ENCODE measurements at regions of chr6 and their contacts with region 1.

Region 1: GRCh38 chr6:56851541-56852259 is 103.2 kb upstream of the BEND6 start:
- DNase-seq: peak; percentile 66
- H3K4me3 ChIP-seq: peak overlapping the region; percentile 57 to 73
- H3K27ac ChIP-seq: peak overlapping the region; percentile 86 to 92
- H3K4me1 ChIP-seq: peaks cover 9 to 22% of the 10 kb centered on the region in 2 experiments; a peak in 3 of 4 replicates
- H3K27me3 ChIP-seq: no peaks in the 10 kb centered on the region
- CTCF ChIP-seq: peak; percentile 77
- EP300 ChIP-seq: peak in 1 of 2 experiments; percentile 29; a peak in 1 of 4 replicates
- RAD21 ChIP-seq: peak; percentile 87

Region 2: GRCh38 chr6:56637640-56638039 is 214.1 kb before region 1 on chr6:
- CTCF ChIA-PET with region 1: interaction called, 27 read pairs
- POLR2A ChIA-PET with region 1: no interaction called
- DNase-seq: peak; percentile 43
- H3K4me3 ChIP-seq: no peak overlapping the region
- H3K27ac ChIP-seq: 0 out of 4 replicates have a peak overlapping the region, but pooled peaks of 1 of the 2 experiments have one; percentile 23
- H3K4me1 ChIP-seq: peaks cover 0 to 6% of the 10 kb centered on the region in 2 experiments; a peak in 2 of 4 replicates
- H3K27me3 ChIP-seq: no peaks in the 10 kb centered on the region
- CTCF ChIP-seq: peak; percentile 76
- EP300 ChIP-seq: no peak
- RAD21 ChIP-seq: peak; percentile 86

Region 3: GRCh38 chr6:56699066-56699654 is 152.5 kb before region 1 on chr6:
- CTCF ChIA-PET with region 1: interaction called, 23 read pairs
- POLR2A ChIA-PET with region 1: no interaction called
- DNase-seq: no peak
- H3K4me3 ChIP-seq: no peak overlapping the region
- H3K27ac ChIP-seq: peak overlapping the region in 1 of 2 experiments; percentile 21; a peak in 1 of 4 replicates
- H3K4me1 ChIP-seq: peaks cover 0 to 19% of the 10 kb centered on the region in 2 experiments; a peak in 3 of 4 replicates
- H3K27me3 ChIP-seq: no peaks in the 10 kb centered on the region
- CTCF ChIP-seq: peak; percentile 68
- EP300 ChIP-seq: no peak
- RAD21 ChIP-seq: peak; percentile 71

Region 4: DNA sequence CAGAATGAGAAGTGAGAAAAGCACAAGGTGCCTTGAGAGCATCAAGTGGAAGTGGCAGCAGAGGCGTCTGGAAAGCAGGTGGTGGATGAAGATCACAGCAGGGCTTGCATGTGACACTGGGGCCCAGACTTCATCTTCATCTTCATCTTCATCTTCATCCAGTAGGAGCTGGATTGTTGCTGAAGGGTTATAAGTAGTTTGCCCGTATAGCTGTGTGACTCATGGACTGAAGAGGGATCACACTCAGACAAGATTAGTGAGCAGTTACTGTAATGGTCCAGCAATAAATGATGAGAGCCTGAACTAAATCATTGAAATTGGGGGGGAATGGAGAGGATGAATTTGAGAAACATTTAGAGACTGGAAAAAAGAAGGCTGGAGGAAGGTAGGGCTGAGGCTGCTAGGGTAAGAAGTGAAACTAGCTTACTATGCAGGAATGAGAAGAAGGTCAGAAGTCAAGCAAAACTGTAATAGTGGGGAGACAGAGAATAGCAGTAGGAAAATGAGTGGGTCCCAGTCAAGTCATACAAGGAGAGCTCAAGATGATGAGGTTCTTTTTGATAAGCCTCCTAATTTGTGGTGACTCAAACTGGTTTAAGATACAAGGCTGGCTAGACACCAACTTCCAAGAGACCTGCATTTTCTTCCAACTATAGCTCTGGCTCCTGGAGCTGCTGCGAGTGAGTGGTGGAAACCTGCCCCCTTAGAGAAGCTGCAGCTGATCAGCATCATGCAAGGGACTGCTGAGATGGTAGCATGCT is 10.9 kb after region 1 on chr6:
- CTCF ChIA-PET with region 1: interaction called, 42 read pairs
- POLR2A ChIA-PET with region 1: interaction called, 3 read pairs
- DNase-seq: no peak
- H3K4me3 ChIP-seq: no peak overlapping the region
- H3K27ac ChIP-seq: peak overlapping the region; percentile 58 to 80
- H3K4me1 ChIP-seq: peaks cover 0 to 51% of the 10 kb centered on the region in 2 experiments
- H3K27me3 ChIP-seq: no peaks in the 10 kb centered on the region
- CTCF ChIP-seq: no peak
- EP300 ChIP-seq: no peak
- RAD21 ChIP-seq: no peak